ENCODE measurements at regions of chr21 and their contacts with region 1.

Region 1: DNA sequence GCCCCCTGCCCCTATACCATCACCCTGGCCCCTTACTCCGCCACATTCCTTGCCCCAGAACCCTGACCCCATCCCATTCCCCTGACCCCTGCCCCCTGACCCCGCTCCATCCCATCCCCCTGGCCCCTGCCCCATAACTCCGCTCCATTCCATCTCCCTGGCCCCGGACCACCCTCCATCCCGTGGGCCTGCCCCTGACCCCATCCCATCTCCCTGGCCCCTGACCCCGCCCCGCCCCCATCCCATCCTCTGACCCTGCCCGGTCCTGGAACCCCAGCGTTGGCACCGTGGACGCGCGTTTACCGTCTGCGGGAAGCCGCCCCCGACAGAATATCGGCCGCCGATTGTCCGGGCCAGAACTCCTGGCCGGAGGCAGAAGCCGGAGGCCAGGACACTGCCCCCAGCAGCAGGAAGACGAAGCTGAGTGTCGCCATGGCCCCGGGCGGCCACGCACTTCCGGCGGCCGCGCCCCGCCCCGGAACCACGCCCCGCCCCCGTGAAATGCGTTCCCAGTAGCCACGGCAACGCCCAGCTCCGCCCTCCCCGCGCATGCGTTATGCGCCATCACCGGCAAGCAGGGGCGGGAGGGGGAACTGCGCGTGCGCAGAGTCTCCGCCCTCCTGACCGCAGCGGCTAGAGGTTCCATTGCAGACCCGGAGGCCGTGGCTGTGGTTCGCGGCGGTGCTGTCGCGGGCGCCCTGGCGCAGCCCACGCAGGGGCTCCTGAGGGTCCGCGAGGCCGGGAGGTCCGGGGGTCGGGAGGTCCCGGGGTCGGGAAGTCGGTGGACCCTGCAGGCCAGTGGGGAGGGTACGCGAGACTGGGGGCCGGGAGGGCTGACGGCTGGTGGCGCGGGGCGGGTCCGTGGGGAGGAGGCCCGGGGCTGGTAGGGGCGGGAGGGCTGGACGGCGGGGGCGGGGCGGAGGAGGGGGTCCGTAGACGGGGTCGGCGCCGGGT is at the start of gene POFUT2:
- DNase-seq: peak; percentile 85
- ATAC-seq: peak; percentile 81
- H3K4me3 ChIP-seq: peak within 1 kb of the TSS; percentile 68 to 80
- H3K27ac ChIP-seq: peak within 1 kb of the TSS; percentile 56; the same call in 1 of the 2 replicates
- H3K4me1 ChIP-seq: peaks cover 11 to 17% of the 10 kb centered on the region in 2 experiments
- H3K27me3 ChIP-seq: no peaks in the 10 kb centered on the region
- CTCF ChIP-seq: no peak
- POLR2A ChIP-seq: peak; percentile 59
- RAD21 ChIP-seq: no peak
- total RNA-seq, gene POFUT2: 20.5 TPM

Region 2: GRCh38 chr21:44477131-44477530 is 810.6 kb before region 1 on chr21:
- CTCF ChIA-PET with region 1: no interaction called
- POLR2A ChIA-PET with region 1: no interaction called
- RAD21 ChIA-PET with region 1: no interaction called
- intact Hi-C with region 1: no loop called
- DNase-seq: no peak
- ATAC-seq: no peak
- H3K4me3 ChIP-seq: no peak overlapping the region
- H3K27ac ChIP-seq: no peak overlapping the region
- H3K4me1 ChIP-seq: no peaks in the 10 kb centered on the region
- H3K27me3 ChIP-seq: no peaks in the 10 kb centered on the region
- CTCF ChIP-seq: no peak
- POLR2A ChIP-seq: no peak
- RAD21 ChIP-seq: no peak

Region 3: DNA sequence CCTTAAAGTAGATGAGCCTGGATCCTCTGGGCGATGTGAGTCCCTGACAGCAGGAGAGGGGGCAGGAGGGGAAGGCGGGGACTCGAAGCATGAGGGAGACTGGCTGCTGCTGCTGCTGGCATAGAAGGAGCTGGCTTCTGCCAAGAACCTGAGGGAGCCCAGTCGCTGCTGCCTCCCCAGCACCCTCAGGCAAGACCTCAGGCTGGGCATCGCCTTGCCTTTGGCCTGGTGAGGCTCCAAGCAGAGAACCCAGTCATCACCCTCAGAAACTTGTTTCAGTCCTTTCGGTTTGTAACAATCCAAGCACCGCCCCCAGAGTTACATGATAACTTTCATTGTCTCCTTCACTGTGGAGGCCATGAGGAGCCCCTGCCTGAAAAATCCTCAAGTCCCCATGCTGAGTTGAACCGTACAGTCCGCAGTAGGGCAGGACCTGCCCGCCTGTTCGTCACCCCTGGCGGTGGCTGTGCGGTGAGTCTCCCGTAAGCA is 38.8 kb before region 1 on chr21:
- CTCF ChIA-PET with region 1: no interaction called
- POLR2A ChIA-PET with region 1: no interaction called
- RAD21 ChIA-PET with region 1: no interaction called
- intact Hi-C with region 1: no loop called
- DNase-seq: no peak
- ATAC-seq: no peak
- H3K4me3 ChIP-seq: no peak overlapping the region
- H3K27ac ChIP-seq: no peak overlapping the region
- H3K4me1 ChIP-seq: peaks cover 0 to 7% of the 10 kb centered on the region in 2 experiments; a peak in 1 of 4 replicates
- H3K27me3 ChIP-seq: no peaks in the 10 kb centered on the region
- CTCF ChIP-seq: no peak
- POLR2A ChIP-seq: no peak
- RAD21 ChIP-seq: no peak

Region 4: GRCh38 chr21:45309069-45309986 is 21.6 kb after region 1 on chr21:
- CTCF ChIA-PET with region 1: interaction called, 16 read pairs
- POLR2A ChIA-PET with region 1: interaction called, 3 read pairs
- RAD21 ChIA-PET with region 1: interaction called in 1 of 2 experiments, 3 read pairs
- intact Hi-C with region 1: no loop called
- DNase-seq: no peak
- ATAC-seq: peak; percentile 96
- H3K4me3 ChIP-seq: no peak overlapping the region
- H3K27ac ChIP-seq: no peak overlapping the region; the same call in 1 of the 2 replicates
- H3K4me1 ChIP-seq: peaks cover 0 to 27% of the 10 kb centered on the region in 2 experiments
- H3K27me3 ChIP-seq: no peaks in the 10 kb centered on the region
- CTCF ChIP-seq: peak in 2 of 3 experiments; percentile 88 to 93; a peak in 4 of 6 replicates
- POLR2A ChIP-seq: no peak
- RAD21 ChIP-seq: no peak

Region 5: GRCh38 chr21:45386721-45387371 is 99.1 kb after region 1 on chr21:
- CTCF ChIA-PET with region 1: no interaction called
- POLR2A ChIA-PET with region 1: no interaction called
- RAD21 ChIA-PET with region 1: interaction called in 1 of 2 experiments, 10 read pairs
- intact Hi-C with region 1: no loop called
- DNase-seq: no peak
- ATAC-seq: peak; percentile 56
- H3K4me3 ChIP-seq: no peak overlapping the region
- H3K27ac ChIP-seq: no peak overlapping the region
- H3K4me1 ChIP-seq: peaks cover 0 to 12% of the 10 kb centered on the region in 2 experiments; a peak in 1 of 4 replicates
- H3K27me3 ChIP-seq: no peaks in the 10 kb centered on the region
- CTCF ChIP-seq: peak in 1 of 3 experiments; percentile 12; a peak in 1 of 6 replicates
- POLR2A ChIP-seq: no peak
- RAD21 ChIP-seq: peak; percentile 37; the same call in 1 of the 2 replicates

Region 6: GRCh38 chr21:45427331-45428271 is 139.9 kb after region 1 on chr21:
- CTCF ChIA-PET with region 1: interaction called, 11 read pairs
- POLR2A ChIA-PET with region 1: no interaction called
- RAD21 ChIA-PET with region 1: no interaction called
- intact Hi-C with region 1: no loop called
- DNase-seq: peak; percentile 67
- ATAC-seq: peak; percentile 94
- H3K4me3 ChIP-seq: peak overlapping the region; percentile 11 to 49; a peak in 3 of 4 replicates
- H3K27ac ChIP-seq: peak overlapping the region; percentile 52
- H3K4me1 ChIP-seq: peaks cover 37 to 58% of the 10 kb centered on the region in 2 experiments
- H3K27me3 ChIP-seq: no peaks in the 10 kb centered on the region
- CTCF ChIP-seq: no peak
- POLR2A ChIP-seq: no peak
- RAD21 ChIP-seq: no peak

Region 7: GRCh38 chr21:45439161-45439872 is 151.6 kb after region 1 on chr21:
- CTCF ChIA-PET with region 1: interaction called, 10 read pairs
- POLR2A ChIA-PET with region 1: interaction called, 4 read pairs
- RAD21 ChIA-PET with region 1: interaction called in 1 of 2 experiments, 4 read pairs
- intact Hi-C with region 1: loop called (anchors 1 kb)
- DNase-seq: peak; percentile 50
- ATAC-seq: peak; percentile 95
- H3K4me3 ChIP-seq: no peak overlapping the region
- H3K27ac ChIP-seq: peak overlapping the region; percentile 2; the same call in 1 of the 2 replicates
- H3K4me1 ChIP-seq: peaks cover 0 to 9% of the 10 kb centered on the region in 2 experiments; a peak in 1 of 4 replicates
- H3K27me3 ChIP-seq: no peaks in the 10 kb centered on the region
- CTCF ChIP-seq: peak; percentile 79 to 90 (median 82)
- POLR2A ChIP-seq: no peak
- RAD21 ChIP-seq: peak; percentile 97

Region 8: DNA sequence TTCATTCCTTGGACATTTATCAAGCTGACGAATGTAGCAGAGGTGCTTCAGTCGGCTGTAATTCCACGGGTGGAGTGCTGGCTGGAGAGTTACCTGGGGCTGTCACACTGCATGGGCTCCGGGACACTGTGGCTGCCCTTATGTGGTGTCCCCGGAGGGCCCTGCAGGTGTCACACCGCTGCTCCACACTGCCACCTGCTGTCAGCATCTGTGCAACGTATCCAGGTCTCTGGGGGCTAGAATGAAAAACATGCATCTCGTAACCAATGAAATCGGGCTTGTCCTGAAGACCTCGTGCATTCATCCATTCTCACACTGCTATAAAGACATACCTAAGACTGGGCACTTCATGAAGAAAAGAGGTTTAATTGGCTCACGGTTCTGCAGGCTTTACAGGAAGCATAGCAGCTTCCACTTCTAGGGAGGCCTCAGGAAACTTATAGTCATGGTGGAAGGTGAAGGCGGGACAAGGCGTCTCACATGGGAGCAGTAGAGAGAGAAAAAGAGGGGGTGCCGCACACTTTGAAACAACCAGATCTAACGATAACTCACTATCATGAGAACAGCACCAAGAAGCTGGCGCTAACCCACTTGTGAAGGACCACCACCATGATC is 309.1 kb after region 1 on chr21:
- CTCF ChIA-PET with region 1: no interaction called
- POLR2A ChIA-PET with region 1: no interaction called
- RAD21 ChIA-PET with region 1: no interaction called
- intact Hi-C with region 1: loop called (anchors 5 kb)
- DNase-seq: peak; percentile 48
- ATAC-seq: peak; percentile 98
- H3K4me3 ChIP-seq: no peak overlapping the region
- H3K27ac ChIP-seq: no peak overlapping the region
- H3K4me1 ChIP-seq: peaks cover 0 to 10% of the 10 kb centered on the region in 2 experiments; a peak in 2 of 4 replicates
- H3K27me3 ChIP-seq: no peaks in the 10 kb centered on the region
- CTCF ChIP-seq: peak; percentile 85 to 93 (median 89)
- POLR2A ChIP-seq: no peak
- RAD21 ChIP-seq: peak; percentile 68

Region 9: DNA sequence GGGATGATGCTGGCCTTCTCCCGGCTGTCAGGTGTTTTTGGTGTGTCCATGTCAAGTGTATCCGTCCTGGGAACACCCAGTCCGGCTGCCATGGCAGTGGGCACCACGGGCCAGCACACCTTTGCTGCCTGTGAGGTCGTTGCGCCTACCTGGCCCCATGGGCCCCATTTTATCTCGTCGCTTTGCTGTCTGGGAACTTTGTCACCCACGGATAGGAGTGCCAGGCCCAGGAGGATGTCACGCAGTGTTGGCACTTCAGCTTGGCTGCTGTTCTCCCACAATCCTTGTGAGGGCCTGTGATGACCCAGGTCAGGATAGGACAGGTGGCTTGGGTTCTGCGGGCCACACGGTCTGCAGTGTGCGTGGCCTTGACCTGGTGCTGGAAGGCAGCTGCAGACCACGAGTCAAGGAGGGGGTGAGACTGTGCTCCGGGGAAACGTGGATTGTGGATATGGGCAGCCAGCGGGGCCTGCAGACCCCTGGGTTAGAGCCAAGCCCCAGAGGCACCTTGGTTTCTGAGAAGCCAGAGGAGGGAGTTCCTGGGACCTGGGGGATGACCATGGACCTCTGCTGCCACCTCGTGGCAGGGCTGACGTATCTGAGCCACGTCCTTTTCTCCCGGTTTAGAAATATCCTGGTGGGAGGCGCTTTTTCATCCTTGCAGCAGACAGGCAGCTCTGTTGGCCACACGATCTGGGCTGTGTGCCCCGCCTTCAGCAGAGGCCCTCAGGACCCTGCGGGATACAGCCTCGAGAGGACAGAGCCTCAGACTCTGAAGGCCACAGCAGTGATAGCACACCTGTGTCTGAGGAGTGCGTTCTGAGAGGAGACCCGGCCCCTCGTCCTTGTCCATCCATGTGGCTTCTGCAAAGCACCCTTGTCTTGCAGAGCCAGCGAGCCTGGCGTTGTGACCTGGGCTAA is 532.7 kb after region 1 on chr21:
- CTCF ChIA-PET with region 1: interaction called, 3 read pairs
- POLR2A ChIA-PET with region 1: no interaction called
- RAD21 ChIA-PET with region 1: no interaction called
- intact Hi-C with region 1: loop called (anchors 2 kb)
- DNase-seq: peak; percentile 75
- ATAC-seq: peak; percentile 92
- H3K4me3 ChIP-seq: no peak overlapping the region
- H3K27ac ChIP-seq: no peak overlapping the region; the same call in 1 of the 2 replicates
- H3K4me1 ChIP-seq: peaks cover 6 to 18% of the 10 kb centered on the region in 2 experiments; a peak in 3 of 4 replicates
- H3K27me3 ChIP-seq: no peaks in the 10 kb centered on the region; the same call in 1 of the 2 replicates
- CTCF ChIP-seq: peak; percentile 82 to 85 (median 84)
- POLR2A ChIP-seq: no peak
- RAD21 ChIP-seq: peak; percentile 90

Measured in HCT116 (cell line).